ENCODE measurements at regions of chr5 and their contacts with region 1.

Region 1: GRCh38 chr5:65871182-65871581 is 55.2 kb upstream of the ERBIN start:
- DNase-seq: peak; percentile 43 to 91
- H3K4me3 ChIP-seq: no peak overlapping the region
- H3K27ac ChIP-seq: peak overlapping the region; percentile 78
- H3K4me1 ChIP-seq: peaks cover 42% of the 10 kb centered on the region
- H3K27me3 ChIP-seq: no peaks in the 10 kb centered on the region
- CTCF ChIP-seq: no peak

Region 2: GRCh38 chr5:65699338-65699737 is 171.8 kb before region 1 on chr5:
- CTCF ChIA-PET with region 1: no interaction called
- POLR2A ChIA-PET with region 1: no interaction called
- intact Hi-C with region 1: no loop called
- DNase-seq: no peak
- H3K4me3 ChIP-seq: no peak overlapping the region
- H3K27ac ChIP-seq: no peak overlapping the region
- H3K4me1 ChIP-seq: no peaks in the 10 kb centered on the region
- H3K27me3 ChIP-seq: no peaks in the 10 kb centered on the region
- CTCF ChIP-seq: no peak

Region 3: GRCh38 chr5:65753189-65753588 is 118.0 kb before region 1 on chr5:
- CTCF ChIA-PET with region 1: no interaction called
- POLR2A ChIA-PET with region 1: no interaction called
- intact Hi-C with region 1: no loop called
- DNase-seq: no peak
- H3K4me3 ChIP-seq: no peak overlapping the region
- H3K27ac ChIP-seq: no peak overlapping the region
- H3K4me1 ChIP-seq: no peaks in the 10 kb centered on the region
- H3K27me3 ChIP-seq: no peaks in the 10 kb centered on the region
- CTCF ChIP-seq: no peak

Region 4: GRCh38 chr5:66072031-66072430 is 200.8 kb after region 1 on chr5:
- CTCF ChIA-PET with region 1: no interaction called
- POLR2A ChIA-PET with region 1: interaction called, 15 read pairs
- intact Hi-C with region 1: no loop called
- DNase-seq: no peak
- H3K4me3 ChIP-seq: no peak overlapping the region
- H3K27ac ChIP-seq: no peak overlapping the region
- H3K4me1 ChIP-seq: no peaks in the 10 kb centered on the region
- H3K27me3 ChIP-seq: no peaks in the 10 kb centered on the region
- CTCF ChIP-seq: no peak

Measured in PC-9 (cell line).